Activated CD8-positive, alpha-beta T cell treated with anti-CD3 and anti-CD28 coated beads for 36 hours (primary cell): ENCODE measurements at regions of chr18 and their contacts with region 1.

Region 1: DNA sequence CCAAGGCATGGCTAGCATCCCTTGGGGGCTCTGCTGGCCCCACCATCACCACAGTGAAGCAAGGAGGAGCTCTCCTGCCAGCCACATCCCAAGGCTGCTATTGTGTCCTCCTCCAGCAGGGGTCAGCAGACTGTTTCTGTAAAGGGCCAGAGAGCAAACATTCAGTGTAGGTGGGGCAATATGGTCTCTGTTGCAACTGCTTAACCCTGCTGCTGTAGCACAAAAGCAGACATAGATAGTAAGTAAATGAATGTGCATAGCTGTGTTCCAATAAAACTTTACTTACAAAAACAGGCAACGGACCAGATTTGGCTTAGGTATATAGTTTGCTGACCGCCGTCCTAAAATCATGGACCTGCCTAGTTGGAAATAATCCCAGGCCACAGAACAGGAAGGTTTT is 36.4 kb upstream of the ZBTB7C start:
- DNase-seq: peak; percentile 87
- ATAC-seq: peak; percentile 85
- H3K4me3 Mint-ChIP-seq: no peak overlapping the region
- H3K27ac Mint-ChIP-seq: no peak overlapping the region
- H3K4me1 Mint-ChIP-seq: peaks cover 2% of the 10 kb centered on the region
- H3K27me3 Mint-ChIP-seq: peaks cover 19% of the 10 kb centered on the region
- CTCF ChIP-seq: peak; percentile 86

Region 2: DNA sequence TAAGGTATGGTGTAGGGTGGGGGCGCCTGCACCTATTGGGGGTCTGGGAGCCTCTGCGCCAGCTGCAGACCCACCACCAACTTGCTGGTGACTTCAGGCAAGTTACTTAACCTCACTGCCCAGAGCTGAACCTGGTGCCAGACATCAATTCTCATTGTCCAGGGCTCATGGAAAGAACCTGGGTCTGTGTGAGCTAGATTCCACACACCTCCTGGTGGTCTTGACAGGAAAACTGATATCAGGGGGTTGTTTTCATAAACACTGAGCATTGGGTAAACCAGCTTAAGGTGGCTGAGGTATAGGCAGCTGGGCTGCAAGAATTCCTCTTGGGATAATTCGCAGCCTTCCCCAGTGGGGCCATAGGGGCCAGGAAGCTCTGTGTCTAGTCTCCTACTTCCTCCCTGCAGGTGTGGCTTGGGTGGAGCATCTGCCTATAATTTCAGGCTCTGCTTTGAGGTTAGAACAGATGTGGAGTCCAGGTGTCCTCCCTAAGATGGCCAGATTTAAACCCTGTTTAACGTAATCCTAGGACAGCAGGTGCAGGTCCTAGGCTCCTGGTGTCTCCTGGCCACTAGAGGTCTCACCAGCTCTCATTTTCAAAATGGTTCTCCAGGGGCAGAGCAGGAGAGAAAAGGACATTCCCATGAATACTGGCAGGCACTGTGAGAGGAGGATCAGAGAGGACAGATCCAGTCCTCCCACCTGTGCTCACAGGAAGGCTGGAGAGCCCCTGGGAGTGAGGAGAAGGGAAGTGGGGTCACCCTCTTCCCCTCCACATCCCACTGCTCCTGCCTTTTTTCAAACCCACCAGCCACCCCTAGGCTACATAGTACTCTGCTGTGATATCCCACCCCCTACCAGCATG is 414.7 kb before region 1 on chr18:
- CTCF ChIA-PET with region 1: interaction called, 8 read pairs
- POLR2A ChIA-PET with region 1: no interaction called
- intact Hi-C with region 1: loop called (anchors 5 kb)
- DNase-seq: peak; percentile 27
- ATAC-seq: no peak
- H3K4me3 Mint-ChIP-seq: no peak overlapping the region
- H3K27ac Mint-ChIP-seq: no peak overlapping the region
- H3K4me1 Mint-ChIP-seq: no peaks in the 10 kb centered on the region
- H3K27me3 Mint-ChIP-seq: no peaks in the 10 kb centered on the region
- CTCF ChIP-seq: peak; percentile 43

Region 3: DNA sequence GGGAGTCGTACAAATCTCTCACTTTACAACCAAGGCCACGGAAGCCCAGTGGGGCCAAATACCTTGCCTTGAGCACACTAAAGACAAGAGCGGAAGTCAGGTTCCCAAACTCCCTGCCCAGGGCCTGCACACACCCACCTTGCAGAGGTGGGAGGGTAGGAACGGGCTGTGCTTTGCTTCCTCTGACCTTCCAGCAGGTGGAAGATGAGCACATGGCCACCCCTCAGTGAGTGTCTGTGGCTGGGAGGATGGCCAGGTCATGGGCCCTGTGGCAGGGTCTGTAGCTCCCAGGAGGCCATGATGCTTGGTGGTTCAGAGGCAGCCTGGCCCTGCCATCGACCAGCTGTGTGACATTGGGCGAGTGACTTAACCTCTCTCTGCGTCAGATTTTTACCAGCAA is 254.5 kb before region 1 on chr18:
- CTCF ChIA-PET with region 1: no interaction called
- POLR2A ChIA-PET with region 1: no interaction called
- intact Hi-C with region 1: no loop called
- DNase-seq: no peak
- ATAC-seq: no peak
- H3K4me3 Mint-ChIP-seq: no peak overlapping the region
- H3K27ac Mint-ChIP-seq: no peak overlapping the region
- H3K4me1 Mint-ChIP-seq: no peaks in the 10 kb centered on the region
- H3K27me3 Mint-ChIP-seq: peaks cover 9% of the 10 kb centered on the region
- CTCF ChIP-seq: no peak

Region 4: GRCh38 chr18:48419277-48420022 is 26.1 kb before region 1 on chr18:
- CTCF ChIA-PET with region 1: interaction called, 18 read pairs
- POLR2A ChIA-PET with region 1: no interaction called
- intact Hi-C with region 1: no loop called
- DNase-seq: no peak
- ATAC-seq: no peak
- H3K4me3 Mint-ChIP-seq: no peak overlapping the region
- H3K27ac Mint-ChIP-seq: no peak overlapping the region
- H3K4me1 Mint-ChIP-seq: peaks cover 2% of the 10 kb centered on the region
- H3K27me3 Mint-ChIP-seq: peaks cover 63% of the 10 kb centered on the region
- CTCF ChIP-seq: no peak

Region 5: DNA sequence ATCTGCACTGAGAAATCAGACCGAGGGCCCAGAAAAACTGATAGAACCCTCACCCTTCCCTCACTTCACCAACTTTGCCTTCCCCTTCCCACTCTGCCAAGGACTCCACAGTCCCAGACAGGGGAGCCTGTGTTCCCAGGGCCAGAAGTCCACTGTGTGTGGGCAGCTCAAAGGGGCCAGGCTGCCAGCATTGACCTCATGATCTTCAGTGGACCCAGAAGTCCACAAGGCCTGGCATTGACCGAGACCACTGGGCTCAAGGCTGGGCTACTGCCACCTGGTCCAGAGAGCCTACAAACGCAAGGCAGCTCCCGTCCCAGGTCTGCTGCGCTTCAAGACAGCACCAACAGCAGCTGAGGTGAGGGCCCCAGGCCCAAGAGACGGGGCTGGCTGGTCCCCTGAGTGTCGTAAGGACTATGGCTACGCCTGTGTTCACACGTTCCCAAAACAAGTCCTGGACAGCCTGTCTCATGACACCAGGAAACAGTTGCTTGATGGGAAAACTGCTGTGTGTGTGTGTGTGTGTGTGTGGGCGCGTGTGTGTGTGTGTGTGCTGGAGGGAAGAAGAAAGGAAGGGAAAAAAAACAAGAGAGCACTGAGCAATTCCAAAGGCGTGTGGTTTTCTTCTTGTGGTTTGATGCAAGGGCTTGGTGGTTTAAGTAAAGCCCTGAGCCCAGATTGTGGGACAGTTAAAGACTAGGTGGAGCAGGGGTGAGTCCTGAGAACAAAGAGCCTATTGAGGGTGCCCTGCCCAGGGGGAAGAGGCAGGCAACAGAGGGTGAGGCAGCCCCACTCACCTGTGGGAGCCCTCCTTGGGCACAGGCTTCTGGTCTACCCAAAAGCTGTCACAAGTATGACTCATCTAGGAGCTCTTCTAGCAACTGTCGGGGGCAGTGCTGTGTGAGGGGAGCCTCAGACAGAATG is 10.3 kb after region 1 on chr18:
- CTCF ChIA-PET with region 1: interaction called, 121 read pairs
- POLR2A ChIA-PET with region 1: interaction called, 3 read pairs
- intact Hi-C with region 1: no loop called
- DNase-seq: peak; percentile 67
- ATAC-seq: peak; percentile 93
- H3K4me3 Mint-ChIP-seq: no peak overlapping the region
- H3K27ac Mint-ChIP-seq: no peak overlapping the region
- H3K4me1 Mint-ChIP-seq: peaks cover 23% of the 10 kb centered on the region
- H3K27me3 Mint-ChIP-seq: peaks cover 33% of the 10 kb centered on the region
- CTCF ChIP-seq: no peak

Region 6: DNA sequence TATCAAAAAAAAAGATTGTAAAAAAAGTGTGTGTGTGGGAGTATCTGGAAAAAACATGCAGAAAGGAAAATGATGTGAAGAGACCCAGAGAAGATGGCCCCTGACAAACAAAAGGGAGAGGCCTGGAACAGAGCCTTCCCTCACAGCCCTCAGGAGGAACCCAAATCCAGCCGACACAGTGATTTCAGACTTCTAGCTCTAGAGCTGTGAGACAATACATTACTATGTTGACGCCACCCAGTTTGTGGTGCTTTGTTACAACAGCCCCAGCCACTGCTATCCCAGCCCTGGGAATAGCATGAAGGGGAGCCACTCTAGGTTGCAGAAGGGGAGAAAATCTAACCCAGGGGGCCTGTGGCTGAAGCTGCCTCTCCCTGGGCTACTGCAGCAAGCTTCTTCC is 22.6 kb after region 1 on chr18:
- CTCF ChIA-PET with region 1: interaction called, 121 read pairs
- POLR2A ChIA-PET with region 1: no interaction called
- intact Hi-C with region 1: no loop called
- DNase-seq: no peak
- ATAC-seq: no peak
- H3K4me3 Mint-ChIP-seq: no peak overlapping the region
- H3K27ac Mint-ChIP-seq: no peak overlapping the region
- H3K4me1 Mint-ChIP-seq: no peaks in the 10 kb centered on the region
- H3K27me3 Mint-ChIP-seq: peaks cover 26% of the 10 kb centered on the region
- CTCF ChIP-seq: no peak

Region 7: DNA sequence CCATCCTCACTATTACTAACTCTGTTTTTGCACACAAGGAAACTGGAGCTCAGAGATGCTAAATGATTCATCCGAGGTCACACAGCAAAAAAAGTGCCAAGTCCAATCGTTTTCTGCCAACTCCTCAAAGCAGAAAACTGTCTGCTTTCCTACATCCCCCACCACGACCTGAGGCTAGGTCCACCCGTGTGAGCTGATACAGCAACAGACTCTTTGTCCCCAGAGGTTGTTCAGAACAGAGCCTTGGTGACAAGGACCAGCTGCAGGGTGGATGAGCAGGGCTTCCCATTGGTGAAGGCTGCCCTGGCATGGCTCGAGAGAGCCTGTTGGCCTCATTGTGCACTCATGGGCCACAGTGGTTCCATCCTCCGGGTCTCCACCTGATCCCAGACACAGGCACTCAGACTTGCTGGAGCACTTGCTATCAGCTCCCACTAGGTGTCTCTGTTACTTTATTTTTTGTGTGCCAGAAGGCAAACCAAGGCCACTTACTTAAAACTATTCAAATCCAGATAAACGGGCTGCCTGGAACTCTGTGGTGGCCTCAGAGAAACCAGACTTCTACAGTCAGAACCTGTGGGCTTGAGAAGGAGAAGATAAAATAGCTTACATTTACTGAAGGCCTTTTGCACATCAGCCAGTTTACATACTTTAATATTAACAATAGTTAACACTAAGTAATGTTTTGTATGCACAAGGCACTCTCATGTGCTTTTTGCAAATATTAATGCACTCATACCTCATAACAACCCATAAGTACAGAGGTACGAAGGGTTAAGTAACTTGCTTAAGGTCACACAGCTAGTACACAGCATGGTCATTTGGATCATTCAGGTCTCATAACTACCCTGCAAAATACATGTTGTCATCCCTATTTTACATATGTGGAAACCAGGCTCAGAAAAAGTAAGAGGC is 30.4 kb after region 1 on chr18:
- CTCF ChIA-PET with region 1: interaction called, 13 read pairs
- POLR2A ChIA-PET with region 1: no interaction called
- intact Hi-C with region 1: no loop called
- DNase-seq: peak; percentile 29
- ATAC-seq: peak; percentile 51
- H3K4me3 Mint-ChIP-seq: no peak overlapping the region
- H3K27ac Mint-ChIP-seq: no peak overlapping the region
- H3K4me1 Mint-ChIP-seq: no peaks in the 10 kb centered on the region
- H3K27me3 Mint-ChIP-seq: peaks cover 23% of the 10 kb centered on the region
- CTCF ChIP-seq: peak; percentile 74

Region 8: DNA sequence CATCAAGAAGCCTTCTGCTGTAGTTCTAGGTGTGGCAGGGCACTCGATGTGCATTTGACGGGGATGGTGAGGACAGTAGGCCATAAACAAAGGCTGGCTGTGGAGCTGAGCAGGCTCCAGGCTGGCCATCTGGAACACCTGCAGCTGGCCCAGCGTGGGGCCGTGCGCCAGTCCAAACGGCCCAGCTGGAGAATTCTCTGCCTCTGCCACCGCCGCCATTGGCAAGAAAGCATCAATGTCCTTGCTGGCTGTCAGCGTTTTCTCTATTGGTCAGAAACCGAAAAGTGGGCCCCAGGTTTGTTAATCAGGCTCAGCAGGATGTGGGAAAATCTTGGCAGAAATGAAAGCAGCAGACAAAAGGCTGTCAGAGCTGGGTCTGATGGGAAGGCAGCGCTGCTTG is 69.2 kb after region 1 on chr18:
- CTCF ChIA-PET with region 1: no interaction called
- POLR2A ChIA-PET with region 1: no interaction called
- intact Hi-C with region 1: no loop called
- DNase-seq: no peak
- ATAC-seq: no peak
- H3K4me3 Mint-ChIP-seq: no peak overlapping the region
- H3K27ac Mint-ChIP-seq: no peak overlapping the region
- H3K4me1 Mint-ChIP-seq: no peaks in the 10 kb centered on the region
- H3K27me3 Mint-ChIP-seq: peaks cover 22% of the 10 kb centered on the region
- CTCF ChIP-seq: no peak